ENCODE measurements at regions of chr5 and their contacts with region 1.

Region 1: GRCh38 chr5:53446908-53447307 is 33.5 kb upstream of the FST start:
- DNase-seq: no peak
- H3K4me3 ChIP-seq: no peak overlapping the region
- H3K27ac ChIP-seq: no peak overlapping the region
- H3K4me1 ChIP-seq: no peaks in the 10 kb centered on the region
- H3K27me3 ChIP-seq: no peaks in the 10 kb centered on the region
- CTCF ChIP-seq: no peak

Region 2: DNA sequence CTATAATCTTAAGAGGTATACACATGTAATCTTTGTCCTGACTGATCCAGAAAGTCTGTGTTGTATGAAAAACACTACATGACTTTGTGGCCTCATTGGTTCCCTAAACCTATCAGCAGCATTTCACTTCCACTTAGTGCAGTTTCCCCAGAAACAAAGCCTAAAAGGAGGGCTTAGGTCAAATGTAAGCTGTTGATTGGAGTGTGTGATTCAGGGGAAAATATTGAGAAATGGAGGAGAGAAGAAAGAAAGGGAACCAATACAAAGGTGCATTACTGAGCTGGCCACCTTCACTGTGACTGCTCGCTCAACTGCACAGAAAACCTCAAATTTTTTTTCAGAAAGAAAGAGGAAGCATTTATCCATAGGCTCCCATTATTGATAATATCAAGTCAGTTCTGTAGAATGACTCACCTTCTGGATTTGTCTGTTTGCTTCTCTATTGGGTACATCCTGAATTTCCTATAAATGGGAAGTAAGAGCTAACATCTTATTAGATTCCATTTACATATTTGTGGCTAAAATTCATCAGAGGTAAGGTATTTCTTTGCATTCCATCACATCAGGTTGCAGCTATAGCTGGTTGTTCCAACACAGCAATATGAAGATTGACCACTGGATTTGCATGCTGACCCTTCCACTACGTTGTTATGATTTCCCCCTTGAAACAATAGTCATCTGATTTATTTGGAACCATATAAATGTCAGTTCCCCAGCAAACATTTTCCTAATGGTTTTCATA is 23.2 kb after region 1 on chr5:
- CTCF ChIA-PET with region 1: no interaction called
- POLR2A ChIA-PET with region 1: interaction called, 13 read pairs
- intact Hi-C with region 1: no loop called
- DNase-seq: peak; percentile 11 to 91
- H3K4me3 ChIP-seq: no peak overlapping the region
- H3K27ac ChIP-seq: peak overlapping the region; percentile 67
- H3K4me1 ChIP-seq: peaks cover 20% of the 10 kb centered on the region
- H3K27me3 ChIP-seq: no peaks in the 10 kb centered on the region
- CTCF ChIP-seq: no peak

Region 3: GRCh38 chr5:53607886-53608285 is 161.0 kb after region 1 on chr5:
- CTCF ChIA-PET with region 1: no interaction called
- POLR2A ChIA-PET with region 1: no interaction called
- intact Hi-C with region 1: no loop called
- DNase-seq: no peak
- H3K4me3 ChIP-seq: no peak overlapping the region
- H3K27ac ChIP-seq: no peak overlapping the region
- H3K4me1 ChIP-seq: no peaks in the 10 kb centered on the region
- H3K27me3 ChIP-seq: no peaks in the 10 kb centered on the region
- CTCF ChIP-seq: no peak

Measured in PC-9 (cell line).